CD8-positive, alpha-beta T cell (primary cell): ENCODE measurements at regions of chr9 and their contacts with region 1.

Region 1: GRCh38 chr9:27787891-27788290 is 214.6 kb upstream of the C9orf72 start:
- DNase-seq: peak in 1 of 9 experiments; percentile 1
- ATAC-seq: no peak
- H3K4me3 ChIP-seq: no peak overlapping the region
- H3K4me3 Mint-ChIP-seq: no peak overlapping the region
- H3K27ac ChIP-seq: no peak overlapping the region
- H3K27ac Mint-ChIP-seq: no peak overlapping the region
- H3K4me1 ChIP-seq: no peaks in the 10 kb centered on the region
- H3K4me1 Mint-ChIP-seq: no peaks in the 10 kb centered on the region
- H3K27me3 ChIP-seq: no peaks in the 10 kb centered on the region
- H3K27me3 Mint-ChIP-seq: peaks cover 5% of the 10 kb centered on the region
- CTCF ChIP-seq: no peak

Region 2: GRCh38 chr9:27622693-27623340 is 165.1 kb before region 1 on chr9:
- CTCF ChIA-PET with region 1: no interaction called
- POLR2A ChIA-PET with region 1: no interaction called
- intact Hi-C with region 1: no loop called
- DNase-seq: no peak
- ATAC-seq: no peak
- H3K4me3 ChIP-seq: no peak overlapping the region
- H3K4me3 Mint-ChIP-seq: no peak overlapping the region
- H3K27ac ChIP-seq: no peak overlapping the region
- H3K27ac Mint-ChIP-seq: no peak overlapping the region
- H3K4me1 ChIP-seq: no peaks in the 10 kb centered on the region
- H3K4me1 Mint-ChIP-seq: no peaks in the 10 kb centered on the region
- H3K27me3 ChIP-seq: no peaks in the 10 kb centered on the region
- H3K27me3 Mint-ChIP-seq: peaks cover 2% of the 10 kb centered on the region
- CTCF ChIP-seq: no peak

Region 3: DNA sequence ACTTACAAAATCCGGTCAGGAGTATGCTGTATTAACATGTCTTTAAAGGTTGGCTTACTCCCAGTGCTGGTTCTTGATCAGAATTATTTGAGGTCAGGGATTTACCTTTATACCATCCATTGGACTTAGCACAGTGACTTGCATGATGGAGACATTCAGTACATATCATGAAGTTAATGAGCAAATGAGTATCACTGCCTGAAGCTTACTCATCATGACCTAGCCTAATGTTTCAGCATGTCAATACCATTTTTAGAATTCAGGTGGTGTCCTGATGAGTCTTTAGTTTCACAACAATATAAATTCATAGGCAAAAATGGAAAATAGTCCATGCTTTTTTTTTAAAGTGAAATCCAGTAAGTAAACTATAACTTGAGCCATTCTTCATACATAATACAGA is 11.4 kb after region 1 on chr9:
- CTCF ChIA-PET with region 1: no interaction called
- POLR2A ChIA-PET with region 1: no interaction called
- intact Hi-C with region 1: loop called in 1 of 2 experiments (anchors 2 kb)
- DNase-seq: no peak
- ATAC-seq: no peak
- H3K4me3 ChIP-seq: no peak overlapping the region
- H3K4me3 Mint-ChIP-seq: no peak overlapping the region
- H3K27ac ChIP-seq: no peak overlapping the region
- H3K27ac Mint-ChIP-seq: no peak overlapping the region
- H3K4me1 ChIP-seq: no peaks in the 10 kb centered on the region
- H3K4me1 Mint-ChIP-seq: no peaks in the 10 kb centered on the region
- H3K27me3 ChIP-seq: no peaks in the 10 kb centered on the region
- H3K27me3 Mint-ChIP-seq: no peaks in the 10 kb centered on the region
- CTCF ChIP-seq: no peak